Sigmoid colon (tissue), 7 donors: ENCODE measurements at regions of chr7 and their contacts with region 1.

Region 1: DNA sequence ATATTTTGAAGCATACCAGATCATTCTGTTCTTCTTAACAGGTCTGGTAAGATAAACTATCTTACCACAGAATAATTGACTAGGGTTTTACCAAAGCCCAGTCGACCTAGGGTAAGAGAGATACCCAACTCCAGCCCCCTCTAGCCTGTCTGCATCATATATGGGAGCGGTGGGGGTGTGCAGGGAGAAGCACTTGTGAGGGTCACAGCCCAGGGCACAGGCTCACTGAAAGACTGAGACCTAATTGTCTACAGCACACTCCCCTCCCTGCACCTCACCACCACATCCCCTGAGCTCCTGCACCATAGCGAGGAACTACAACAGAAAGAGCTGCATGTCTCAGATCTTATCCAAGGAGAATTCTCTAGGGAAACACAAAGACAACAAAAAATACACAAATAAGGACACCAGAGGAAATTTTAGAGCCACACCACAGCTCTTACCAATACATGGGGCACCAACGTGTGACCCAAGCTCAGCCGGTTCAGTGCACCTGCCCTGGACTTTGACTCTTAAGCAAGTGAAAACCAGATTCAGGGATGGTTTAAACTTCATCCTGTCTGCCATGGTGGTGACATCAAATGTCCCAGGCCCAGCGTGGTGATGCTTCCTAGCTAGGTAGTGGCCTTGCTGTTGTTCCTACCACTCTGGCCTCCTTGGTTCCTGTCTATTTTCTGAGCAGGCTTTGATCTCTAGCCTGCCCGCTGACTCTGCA is 150.8 kb downstream of the HERPUD2 start:
- DNase-seq: no peak
- H3K4me3 ChIP-seq: no peak overlapping the region
- H3K27ac ChIP-seq: no peak overlapping the region
- H3K4me1 ChIP-seq: no peaks in the 10 kb centered on the region
- H3K27me3 ChIP-seq: no peaks in the 10 kb centered on the region
- CTCF ChIP-seq: no peak
- EP300 ChIP-seq: no peak
- POLR2A ChIP-seq: no peak

Region 2: GRCh38 chr7:35313575-35313974 is 230.6 kb before region 1 on chr7:
- intact Hi-C with region 1: no loop called
- DNase-seq: no peak
- H3K4me3 ChIP-seq: no peak overlapping the region
- H3K27ac ChIP-seq: no peak overlapping the region
- H3K4me1 ChIP-seq: peaks cover 0 to 8% (median 3%) of the 10 kb centered on the region in 4 donors
- H3K27me3 ChIP-seq: no peaks in the 10 kb centered on the region
- CTCF ChIP-seq: no peak
- EP300 ChIP-seq: no peak
- POLR2A ChIP-seq: no peak

Region 3: DNA sequence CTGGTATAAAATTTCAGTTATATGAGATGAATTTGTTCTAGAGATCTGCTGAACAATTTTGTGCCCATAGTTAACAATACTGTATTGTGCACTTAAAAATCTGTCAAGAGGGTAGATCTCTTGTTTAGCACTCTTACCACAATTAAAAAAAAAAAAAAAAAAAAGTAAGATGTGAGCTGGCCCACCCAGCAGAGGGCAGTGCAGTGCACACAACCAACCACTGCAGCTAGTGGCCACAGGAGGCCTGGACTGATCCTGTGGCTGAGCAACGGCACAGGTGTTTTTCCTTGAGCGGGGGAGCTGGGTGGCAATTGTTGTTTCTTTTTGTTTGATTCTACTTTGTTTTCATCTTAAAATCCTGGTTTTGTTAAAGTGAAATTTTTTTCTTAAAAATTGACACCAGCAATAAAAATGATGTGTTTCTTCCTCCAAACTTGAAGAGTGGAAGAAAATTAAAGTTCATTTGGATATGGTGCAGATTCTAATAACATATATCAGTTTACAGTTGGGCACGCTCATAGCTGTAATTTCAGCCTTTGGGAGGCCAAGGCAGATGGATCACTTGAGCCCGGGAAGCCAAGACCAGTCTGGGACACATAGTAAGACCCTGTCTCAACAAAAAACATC is 119.2 kb before region 1 on chr7:
- intact Hi-C with region 1: loop called (anchors 10 kb)
- DNase-seq: no peak
- H3K4me3 ChIP-seq: no peak overlapping the region
- H3K27ac ChIP-seq: no peak overlapping the region
- H3K4me1 ChIP-seq: peaks cover 0 to 3% (median 0%) of the 10 kb centered on the region in 4 donors
- H3K27me3 ChIP-seq: no peaks in the 10 kb centered on the region
- CTCF ChIP-seq: peak; percentile 11 to 55 (median 42)
- EP300 ChIP-seq: no peak
- POLR2A ChIP-seq: no peak